ENCODE measurements at regions of chr10 and their contacts with region 1.

Region 1: GRCh38 chr10:69318106-69318866 is 40.0 kb downstream of the HK1 start:
- DNase-seq: peak; percentile 94 to 96 (median 95)
- ATAC-seq: peak; percentile 93 to 97 (median 96)
- H3K4me3 ChIP-seq: peak overlapping the region; percentile 74 to 100 (median 94)
- H3K27ac ChIP-seq: peak overlapping the region; percentile 90 to 98 (median 95)
- H3K4me1 ChIP-seq: peaks cover 8 to 51% (median 33%) of the 10 kb centered on the region in 12 donors
- H3K27me3 ChIP-seq: no peaks in the 10 kb centered on the region
- CTCF ChIP-seq: peak in 2 of 12 donors; percentile 11 to 21
- POLR2A ChIP-seq: peak in 1 of 2 donors; percentile 90

Region 2: GRCh38 chr10:69259547-69260243 is 58.6 kb before region 1 on chr10:
- intact Hi-C with region 1: no loop called
- DNase-seq: no peak
- ATAC-seq: no peak
- H3K4me3 ChIP-seq: no peak overlapping the region
- H3K27ac ChIP-seq: no peak overlapping the region
- H3K4me1 ChIP-seq: peaks cover 0 to 4% (median 0%) of the 10 kb centered on the region in 12 donors
- H3K27me3 ChIP-seq: no peaks in the 10 kb centered on the region
- CTCF ChIP-seq: no peak
- POLR2A ChIP-seq: no peak

Region 3: GRCh38 chr10:69392481-69393000 is 74.3 kb after region 1 on chr10:
- intact Hi-C with region 1: loop called in 5 of 10 experiments (anchors 5 kb)
- DNase-seq: peak; percentile 83 to 90 (median 85)
- ATAC-seq: peak; percentile 84 to 92 (median 90)
- H3K4me3 ChIP-seq: no peak overlapping the region
- H3K27ac ChIP-seq: peak overlapping the region in 1 of 12 donors; percentile 9
- H3K4me1 ChIP-seq: peaks cover 0 to 41% (median 20%) of the 10 kb centered on the region in 12 donors
- H3K27me3 ChIP-seq: no peaks in the 10 kb centered on the region
- CTCF ChIP-seq: peak; percentile 89 to 98 (median 96)
- POLR2A ChIP-seq: no peak

Region 4: GRCh38 chr10:69757553-69758309 is 439.4 kb after region 1 on chr10:
- intact Hi-C with region 1: no loop called
- DNase-seq: peak in 4 of 5 donors; percentile 36 to 71 (median 51)
- ATAC-seq: peak in 3 of 4 donors; percentile 74 to 84 (median 75)
- H3K4me3 ChIP-seq: no peak overlapping the region
- H3K27ac ChIP-seq: no peak overlapping the region
- H3K4me1 ChIP-seq: peaks cover 0 to 14% (median 6%) of the 10 kb centered on the region in 12 donors
- H3K27me3 ChIP-seq: peaks cover 0 to 2% (median 0%) of the 10 kb centered on the region in 9 donors
- CTCF ChIP-seq: no peak
- POLR2A ChIP-seq: no peak

Measured in heart left ventricle (tissue), 16 donors.